K562 (cell line): ENCODE measurements at regions of chr10 and their contacts with region 1.

Region 1: GRCh38 chr10:97553575-97554031 is 19.0 kb upstream of the ANKRD2 start:
- DNase-seq: peak; percentile 35 to 66 (median 52)
- ATAC-seq: peak; percentile 96
- H3K4me3 ChIP-seq: no peak overlapping the region
- H3K27ac ChIP-seq: no peak overlapping the region
- H3K4me1 ChIP-seq: no peaks in the 10 kb centered on the region; a peak in 2 of 5 replicates
- H3K27me3 ChIP-seq: no peaks in the 10 kb centered on the region
- CTCF ChIP-seq: peak; percentile 75 to 81 (median 80)
- EP300 ChIP-seq: no peak
- POLR2A ChIP-seq: no peak
- RAD21 ChIP-seq: peak; percentile 25 to 77; a peak in 2 of 4 replicates

Region 2: GRCh38 chr10:97463363-97464132 is 90.1 kb before region 1 on chr10:
- CTCF ChIA-PET with region 1: no interaction called
- POLR2A ChIA-PET with region 1: no interaction called
- in situ Hi-C with region 1: no loop called
- intact Hi-C with region 1: loop called (anchors 5 kb)
- DNase-seq: peak; percentile 23 to 42 (median 40)
- ATAC-seq: peak; percentile 88
- H3K4me3 ChIP-seq: no peak overlapping the region
- H3K27ac ChIP-seq: no peak overlapping the region
- H3K4me1 ChIP-seq: no peaks in the 10 kb centered on the region
- H3K27me3 ChIP-seq: no peaks in the 10 kb centered on the region
- CTCF ChIP-seq: peak; percentile 75 to 78 (median 76)
- EP300 ChIP-seq: no peak
- POLR2A ChIP-seq: no peak
- RAD21 ChIP-seq: peak; percentile 44 to 65

Region 3: GRCh38 chr10:97898429-97898828 is 344.8 kb after region 1 on chr10:
- CTCF ChIA-PET with region 1: no interaction called
- POLR2A ChIA-PET with region 1: no interaction called
- in situ Hi-C with region 1: no loop called
- intact Hi-C with region 1: no loop called
- DNase-seq: peak; percentile 25 to 53 (median 49)
- ATAC-seq: peak; percentile 72
- H3K4me3 ChIP-seq: no peak overlapping the region
- H3K27ac ChIP-seq: no peak overlapping the region; the same call in 2 of the 3 replicates
- H3K4me1 ChIP-seq: peaks cover 8 to 11% of the 10 kb centered on the region in 2 experiments; a peak in 4 of 5 replicates
- H3K27me3 ChIP-seq: peaks cover 4 to 26% of the 10 kb centered on the region in 2 experiments; a peak in 2 of 5 replicates
- CTCF ChIP-seq: no peak
- EP300 ChIP-seq: peak; percentile 27; the same call in 1 of the 2 replicates
- POLR2A ChIP-seq: no peak
- RAD21 ChIP-seq: no peak